CD14-positive monocyte (primary cell): ENCODE measurements at regions of chr20 and their contacts with region 1.

Region 1: DNA sequence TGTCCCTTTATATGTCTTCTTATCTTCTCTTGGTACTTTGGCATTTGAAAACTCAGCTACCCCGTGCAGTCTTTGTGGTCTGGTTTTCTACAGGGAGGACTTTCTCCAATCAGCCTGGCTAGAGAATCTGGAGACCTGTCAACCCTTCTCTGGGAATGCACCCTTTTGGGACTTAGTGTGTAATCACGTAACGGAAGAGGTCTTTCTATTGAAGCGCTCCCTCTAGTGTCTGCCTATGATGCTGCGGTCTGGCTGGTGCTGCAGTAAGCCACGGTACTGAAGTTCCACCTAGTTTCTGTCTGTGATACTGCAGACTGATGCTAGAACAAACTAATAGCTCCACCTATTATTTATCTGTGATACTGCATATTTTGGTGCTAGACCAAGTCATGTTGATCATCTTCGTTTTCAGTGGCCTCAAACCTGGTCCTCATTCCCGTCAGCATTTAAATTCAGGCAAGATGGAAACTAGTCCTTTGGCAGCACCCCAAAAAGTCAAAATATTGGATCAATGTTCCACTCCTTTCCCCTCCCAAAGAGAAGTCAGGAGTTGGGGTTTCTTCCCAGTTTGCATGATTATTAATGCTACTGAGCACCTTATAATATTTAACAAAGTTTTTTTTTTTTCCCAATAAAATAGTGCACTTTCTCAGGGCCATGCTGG is 12.5 kb upstream of the SIRPB2 start:
- DNase-seq: peak; percentile 91 to 96 (median 95)
- H3K4me3 ChIP-seq: no peak overlapping the region
- H3K4me3 Mint-ChIP-seq: no peak overlapping the region
- H3K27ac ChIP-seq: no peak overlapping the region
- H3K27ac Mint-ChIP-seq: peak overlapping the region in 5 of 7 donors; percentile 58 to 87 (median 70)
- H3K4me1 ChIP-seq: peaks cover 3 to 11% of the 10 kb centered on the region in 2 donors
- H3K4me1 Mint-ChIP-seq: peaks cover 20% of the 10 kb centered on the region
- H3K27me3 ChIP-seq: no peaks in the 10 kb centered on the region
- H3K27me3 Mint-ChIP-seq: peaks cover 0 to 9% (median 1%) of the 10 kb centered on the region in 3 donors
- CTCF ChIP-seq: peak; percentile 99

Region 2: DNA sequence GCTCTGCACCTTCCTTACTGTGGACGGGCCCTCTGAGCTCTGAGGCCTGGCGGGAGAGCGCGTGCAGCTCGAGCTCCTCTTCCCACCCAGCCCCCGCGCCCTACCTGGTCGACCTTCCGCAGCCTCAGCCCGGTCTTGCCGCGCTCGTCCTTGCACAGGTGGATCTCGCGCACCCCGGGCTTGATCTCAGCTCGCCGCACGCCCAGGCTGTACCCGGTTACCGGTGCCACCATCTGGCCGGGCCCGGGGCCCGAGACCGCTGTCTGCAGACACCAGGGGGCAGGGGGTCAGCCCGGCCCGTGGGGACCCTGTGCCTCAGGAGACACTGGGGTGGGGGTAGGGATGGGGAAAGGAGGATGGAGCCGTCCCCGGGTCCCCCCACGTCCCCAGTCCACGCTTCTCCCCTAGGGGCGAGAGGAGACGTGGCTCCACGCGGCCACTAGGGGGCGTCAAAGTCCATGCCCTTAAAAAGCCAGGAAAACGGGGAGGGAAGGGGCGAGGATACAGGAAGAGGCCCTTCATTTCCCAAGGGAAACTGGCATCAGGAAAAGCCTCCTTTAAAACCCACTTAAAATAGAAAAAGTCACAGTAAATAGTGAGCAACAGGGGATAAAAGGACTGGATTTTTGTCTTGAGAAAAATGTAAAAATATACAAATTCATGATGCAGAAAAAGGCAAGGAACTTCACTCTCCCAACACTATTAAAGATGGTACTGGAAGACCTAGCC is 190.3 kb before region 1 on chr20:
- intact Hi-C with region 1: loop called (anchors 2 to 5 kb)
- DNase-seq: peak; percentile 44 to 71 (median 64)
- H3K4me3 ChIP-seq: no peak overlapping the region
- H3K4me3 Mint-ChIP-seq: no peak overlapping the region
- H3K27ac ChIP-seq: no peak overlapping the region
- H3K27ac Mint-ChIP-seq: no peak overlapping the region
- H3K4me1 ChIP-seq: peaks cover 6 to 13% of the 10 kb centered on the region in 2 donors
- H3K4me1 Mint-ChIP-seq: peaks cover 8% of the 10 kb centered on the region
- H3K27me3 ChIP-seq: no peaks in the 10 kb centered on the region
- H3K27me3 Mint-ChIP-seq: peaks cover 0 to 6% (median 0%) of the 10 kb centered on the region in 3 donors
- CTCF ChIP-seq: peak; percentile 100

Region 3: GRCh38 chr20:1456300-1456699 is 47.4 kb before region 1 on chr20:
- intact Hi-C with region 1: no loop called
- DNase-seq: no peak
- H3K4me3 ChIP-seq: no peak overlapping the region
- H3K4me3 Mint-ChIP-seq: no peak overlapping the region
- H3K27ac ChIP-seq: no peak overlapping the region
- H3K27ac Mint-ChIP-seq: peak overlapping the region in 1 of 7 donors; percentile 1
- H3K4me1 ChIP-seq: no peaks in the 10 kb centered on the region
- H3K4me1 Mint-ChIP-seq: no peaks in the 10 kb centered on the region
- H3K27me3 ChIP-seq: no peaks in the 10 kb centered on the region
- H3K27me3 Mint-ChIP-seq: no peaks in the 10 kb centered on the region
- CTCF ChIP-seq: no peak

Region 4: GRCh38 chr20:1466211-1467081 is 37.2 kb before region 1 on chr20 and contains the start of gene NSFL1C:
- intact Hi-C with region 1: loop called in 1 of 2 experiments (anchors 5 kb)
- DNase-seq: peak; percentile 90 to 94 (median 93)
- H3K4me3 ChIP-seq: peak within 1 kb of the TSS; percentile 54 to 87 (median 85)
- H3K4me3 Mint-ChIP-seq: peak within 1 kb of the TSS; percentile 87 to 91
- H3K27ac ChIP-seq: peak within 1 kb of the TSS; percentile 74 to 97
- H3K27ac Mint-ChIP-seq: peak within 1 kb of the TSS; percentile 96 to 100 (median 99)
- H3K4me1 ChIP-seq: peaks cover 70 to 83% of the 10 kb centered on the region in 2 donors
- H3K4me1 Mint-ChIP-seq: peaks cover 74% of the 10 kb centered on the region
- H3K27me3 ChIP-seq: no peaks in the 10 kb centered on the region
- H3K27me3 Mint-ChIP-seq: peaks cover 0 to 2% (median 0%) of the 10 kb centered on the region in 3 donors
- CTCF ChIP-seq: peak; percentile 100
- polyA plus RNA-seq, gene NSFL1C: 52.8 to 80.8 (median 56.8) TPM

Region 5: GRCh38 chr20:1472556-1473245 is 31.0 kb before region 1 on chr20:
- intact Hi-C with region 1: loop called (anchors 2 to 5 kb)
- DNase-seq: peak; percentile 62 to 81 (median 69)
- H3K4me3 ChIP-seq: peak overlapping the region in 1 of 3 experiments; percentile 15
- H3K4me3 Mint-ChIP-seq: peak overlapping the region in 1 of 2 donors; percentile 8
- H3K27ac ChIP-seq: peak overlapping the region in 1 of 2 donors; percentile 97
- H3K27ac Mint-ChIP-seq: peak overlapping the region; percentile 70 to 93 (median 87)
- H3K4me1 ChIP-seq: peaks cover 65 to 98% of the 10 kb centered on the region in 2 donors
- H3K4me1 Mint-ChIP-seq: peaks cover 82% of the 10 kb centered on the region
- H3K27me3 ChIP-seq: no peaks in the 10 kb centered on the region
- H3K27me3 Mint-ChIP-seq: peaks cover 0 to 3% (median 0%) of the 10 kb centered on the region in 3 donors
- CTCF ChIP-seq: no peak

Region 6: DNA sequence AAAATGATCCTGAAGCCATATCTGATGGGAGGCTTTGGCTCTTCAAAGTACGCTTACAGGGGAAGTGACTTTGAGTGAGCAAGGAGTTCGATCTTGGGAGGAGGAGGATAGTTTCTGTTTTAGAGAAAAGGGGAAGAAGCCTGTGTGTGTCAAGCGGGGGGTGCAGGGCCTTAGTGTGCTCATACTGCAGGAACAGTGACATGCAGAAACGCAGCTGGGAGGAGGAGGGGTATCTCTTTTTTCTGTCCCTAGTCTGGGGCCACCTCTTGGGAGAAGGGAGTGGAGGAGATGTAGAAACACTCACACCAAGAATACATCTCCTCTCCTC is 34.0 kb after region 1 on chr20:
- intact Hi-C with region 1: no loop called
- DNase-seq: peak; percentile 92 to 96 (median 94)
- H3K4me3 ChIP-seq: peak overlapping the region; percentile 31 to 72 (median 52)
- H3K4me3 Mint-ChIP-seq: peak overlapping the region; percentile 74 to 85
- H3K27ac ChIP-seq: peak overlapping the region; percentile 97 to 99
- H3K27ac Mint-ChIP-seq: peak overlapping the region; percentile 98 to 100 (median 99)
- H3K4me1 ChIP-seq: peaks cover 65 to 70% of the 10 kb centered on the region in 2 donors
- H3K4me1 Mint-ChIP-seq: peaks cover 65% of the 10 kb centered on the region
- H3K27me3 ChIP-seq: no peaks in the 10 kb centered on the region
- H3K27me3 Mint-ChIP-seq: peaks cover 0 to 3% (median 1%) of the 10 kb centered on the region in 3 donors
- CTCF ChIP-seq: no peak

Region 7: GRCh38 chr20:1776681-1777475 is 273.2 kb after region 1 on chr20:
- intact Hi-C with region 1: loop called in 1 of 2 experiments (anchors 10 kb)
- DNase-seq: peak; percentile 68 to 80 (median 75)
- H3K4me3 ChIP-seq: peak overlapping the region; percentile 48 to 76 (median 66)
- H3K4me3 Mint-ChIP-seq: peak overlapping the region; percentile 78 to 88
- H3K27ac ChIP-seq: peak overlapping the region in 1 of 2 donors; percentile 43
- H3K27ac Mint-ChIP-seq: peak overlapping the region in 2 of 7 donors; percentile 17 to 81
- H3K4me1 ChIP-seq: peaks cover 11 to 16% of the 10 kb centered on the region in 2 donors
- H3K4me1 Mint-ChIP-seq: peaks cover 17% of the 10 kb centered on the region
- H3K27me3 ChIP-seq: no peaks in the 10 kb centered on the region
- H3K27me3 Mint-ChIP-seq: peaks cover 4 to 9% (median 8%) of the 10 kb centered on the region in 3 donors
- CTCF ChIP-seq: peak; percentile 78